BJ (cell line): ENCODE measurements at regions of chr1 and their contacts with region 1.

Region 1: DNA sequence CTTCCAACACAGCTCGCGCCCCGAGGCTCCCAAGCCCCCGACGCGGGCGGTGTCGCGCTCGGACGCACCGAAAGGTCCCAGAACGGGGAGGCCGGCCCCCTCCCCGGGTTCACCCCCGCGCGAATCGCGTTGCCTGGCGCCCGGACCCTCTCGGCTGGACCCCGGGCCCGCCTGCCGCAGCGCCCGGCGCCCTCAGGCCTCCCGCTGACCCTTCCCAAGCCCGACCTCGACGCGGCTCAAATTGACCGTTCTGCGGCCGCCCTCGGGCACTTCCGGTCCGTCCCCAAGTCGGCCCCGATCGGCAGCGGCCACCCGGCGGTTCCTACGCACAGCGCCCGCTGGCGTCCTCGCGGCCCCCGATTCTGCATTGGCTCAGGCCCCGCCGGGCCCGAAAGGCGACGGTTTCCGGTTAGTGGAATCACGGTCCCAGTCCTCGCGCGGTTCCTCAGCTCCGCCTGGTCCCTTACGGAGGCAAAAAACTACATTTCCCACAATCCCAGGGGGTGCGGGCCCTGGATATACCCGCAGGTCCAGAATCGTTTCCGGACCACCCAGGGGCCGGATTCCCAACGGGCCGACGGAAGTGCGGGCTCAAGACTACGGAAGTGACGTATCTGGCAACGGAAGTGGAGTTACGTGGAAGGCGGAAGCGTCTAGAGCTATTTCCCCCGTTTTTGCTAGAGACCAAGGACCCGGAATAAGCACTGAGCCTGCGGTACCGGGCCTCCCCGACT is at the start of gene AURKAIP1:
- DNase-seq: peak; percentile 99
- H3K4me3 ChIP-seq: peak within 1 kb of the TSS; percentile 78
- H3K27me3 ChIP-seq: no peaks in the 10 kb centered on the region
- CTCF ChIP-seq: peak; percentile 51
- polyA plus RNA-seq, gene AURKAIP1: 73.2 and 97.8 TPM in 2 replicates

Region 2: GRCh38 chr1:1185101-1185765 is 189.9 kb before region 1 on chr1:
- CTCF ChIA-PET with region 1: no interaction called
- POLR2A ChIA-PET with region 1: no interaction called
- DNase-seq: no peak
- H3K4me3 ChIP-seq: no peak overlapping the region
- H3K27me3 ChIP-seq: no peaks in the 10 kb centered on the region
- CTCF ChIP-seq: no peak

Region 3: GRCh38 chr1:1331068-1331965 is 43.8 kb before region 1 on chr1 and contains the start of gene TAS1R3:
- CTCF ChIA-PET with region 1: interaction called, 10 read pairs
- POLR2A ChIA-PET with region 1: no interaction called
- DNase-seq: no peak
- H3K4me3 ChIP-seq: no peak within 1 kb of the TSS
- H3K27me3 ChIP-seq: no peaks in the 10 kb centered on the region
- CTCF ChIP-seq: no peak
- polyA plus RNA-seq, gene TAS1R3: 0.06 and 0.11 TPM in 2 replicates

Region 4: DNA sequence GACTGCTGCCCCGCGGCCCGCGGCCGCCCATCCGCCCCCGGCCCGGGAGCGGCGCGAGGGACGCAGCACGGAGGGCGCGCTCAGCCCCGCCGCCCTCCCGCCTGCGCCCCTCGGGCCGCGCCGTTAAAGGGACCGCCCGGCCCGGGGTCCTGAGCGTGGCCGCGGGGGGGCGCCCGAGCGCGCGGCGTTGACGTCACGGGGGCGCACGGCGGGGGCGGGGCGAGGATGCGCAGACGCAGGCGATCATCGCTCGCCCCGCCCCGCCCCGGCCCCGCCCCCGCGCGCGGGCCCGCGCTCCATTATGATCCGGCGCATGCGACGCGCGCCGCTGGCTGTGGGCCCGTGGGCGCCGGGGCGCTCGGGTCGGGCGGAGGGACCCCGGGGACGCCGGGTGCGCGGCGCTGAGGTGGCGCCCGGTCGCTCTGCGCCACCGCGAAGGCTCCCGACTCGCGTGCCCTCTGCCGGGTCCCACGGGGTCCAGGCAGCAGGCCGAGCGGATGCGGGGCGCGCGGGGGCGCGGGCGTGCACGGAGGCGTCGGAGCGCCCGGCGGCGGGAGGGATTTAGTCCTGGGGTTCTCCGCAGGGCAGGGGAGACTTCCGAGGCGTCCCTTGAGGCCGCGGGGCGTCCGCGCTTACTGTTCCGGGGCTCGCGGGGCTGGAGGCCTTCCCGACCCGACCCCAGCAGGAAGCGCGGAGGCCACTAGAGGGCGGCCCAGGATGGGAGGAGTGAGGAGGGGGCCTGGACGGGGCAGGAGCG is 25.7 kb before region 1 on chr1 and contains the start of gene DVL1:
- CTCF ChIA-PET with region 1: interaction called, 46 read pairs
- POLR2A ChIA-PET with region 1: no interaction called
- DNase-seq: no peak
- H3K4me3 ChIP-seq: peak within 1 kb of the TSS; percentile 78
- H3K27me3 ChIP-seq: no peaks in the 10 kb centered on the region
- CTCF ChIP-seq: peak; percentile 52
- polyA plus RNA-seq, gene DVL1: 16.2 and 23.6 TPM in 2 replicates

Region 5: GRCh38 chr1:1358433-1359261 is 16.4 kb before region 1 on chr1 and contains the start of gene MXRA8:
- CTCF ChIA-PET with region 1: interaction called, 43 read pairs
- POLR2A ChIA-PET with region 1: interaction called, 4 read pairs
- DNase-seq: peak; percentile 73
- H3K4me3 ChIP-seq: peak within 1 kb of the TSS; percentile 95
- H3K27me3 ChIP-seq: no peaks in the 10 kb centered on the region
- CTCF ChIP-seq: no peak
- polyA plus RNA-seq, gene MXRA8: 427 and 702 TPM in 2 replicates